Heart left ventricle (tissue), 16 donors: ENCODE measurements at regions of chr2 and their contacts with region 1.

Region 1: GRCh38 chr2:163471947-163472346 is 263.9 kb downstream of the FIGN start:
- DNase-seq: no peak
- ATAC-seq: peak; percentile 32 to 70 (median 52)
- H3K4me3 ChIP-seq: no peak overlapping the region
- H3K27ac ChIP-seq: no peak overlapping the region
- H3K4me1 ChIP-seq: peaks cover 0 to 19% (median 0%) of the 10 kb centered on the region in 12 donors
- H3K27me3 ChIP-seq: no peaks in the 10 kb centered on the region
- CTCF ChIP-seq: peak in 10 of 12 donors; percentile 17 to 56 (median 37)
- POLR2A ChIP-seq: no peak

Region 2: DNA sequence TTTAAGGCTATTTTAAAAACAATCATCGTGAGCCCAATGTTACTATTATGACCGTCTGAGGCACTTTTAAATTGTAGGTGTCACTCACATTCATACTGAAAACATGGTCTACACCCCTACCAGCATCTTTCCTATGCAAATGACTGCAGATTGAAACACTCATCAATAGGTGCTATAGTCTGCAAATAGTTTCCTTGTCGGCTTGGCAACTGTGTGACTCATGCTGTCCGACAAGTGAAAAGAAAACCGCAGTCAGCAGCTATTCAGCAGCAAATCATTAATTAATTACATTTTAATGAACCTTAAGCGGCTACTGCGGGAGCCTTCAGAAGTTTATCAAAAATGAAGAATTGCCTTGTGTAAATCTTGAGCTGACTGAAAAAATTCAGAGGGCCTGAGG is 129.4 kb after region 1 on chr2:
- intact Hi-C with region 1: loop called in 1 of 10 experiments (anchors 10 kb)
- DNase-seq: no peak
- ATAC-seq: no peak
- H3K4me3 ChIP-seq: no peak overlapping the region
- H3K27ac ChIP-seq: no peak overlapping the region
- H3K4me1 ChIP-seq: peaks cover 0 to 18% (median 4%) of the 10 kb centered on the region in 12 donors
- H3K27me3 ChIP-seq: no peaks in the 10 kb centered on the region
- CTCF ChIP-seq: no peak
- POLR2A ChIP-seq: no peak

Region 3: GRCh38 chr2:163641986-163642385 is 170.0 kb after region 1 on chr2:
- intact Hi-C with region 1: no loop called
- DNase-seq: no peak
- ATAC-seq: peak in 1 of 4 donors; percentile 38
- H3K4me3 ChIP-seq: no peak overlapping the region
- H3K27ac ChIP-seq: no peak overlapping the region
- H3K4me1 ChIP-seq: peaks cover 0 to 38% (median 6%) of the 10 kb centered on the region in 12 donors
- H3K27me3 ChIP-seq: no peaks in the 10 kb centered on the region
- CTCF ChIP-seq: no peak
- POLR2A ChIP-seq: no peak

Region 4: DNA sequence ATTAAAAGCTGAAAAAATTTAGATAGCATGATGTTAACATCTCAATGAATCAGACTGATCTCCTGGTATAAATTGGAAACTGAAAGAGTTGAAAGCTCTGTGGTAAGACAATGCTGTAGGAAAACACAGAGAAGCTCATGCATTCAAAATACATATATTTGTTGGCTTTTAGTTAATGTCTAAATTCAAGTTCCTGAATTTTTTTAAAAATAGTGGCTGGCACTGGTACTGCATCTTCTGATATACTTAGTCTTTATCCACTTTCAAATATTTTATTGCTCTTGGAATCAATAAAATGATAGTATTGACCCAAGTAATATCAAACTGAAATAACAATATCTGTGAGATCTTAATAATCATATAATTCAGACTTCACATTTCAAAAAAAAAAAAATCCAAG is 415.2 kb after region 1 on chr2:
- intact Hi-C with region 1: loop called in 1 of 10 experiments (anchors 10 kb)
- DNase-seq: no peak
- ATAC-seq: no peak
- H3K4me3 ChIP-seq: no peak overlapping the region
- H3K27ac ChIP-seq: no peak overlapping the region
- H3K4me1 ChIP-seq: no peaks in the 10 kb centered on the region
- H3K27me3 ChIP-seq: no peaks in the 10 kb centered on the region
- CTCF ChIP-seq: peak in 4 of 12 donors; percentile 10 to 63 (median 48)
- POLR2A ChIP-seq: no peak

Region 5: DNA sequence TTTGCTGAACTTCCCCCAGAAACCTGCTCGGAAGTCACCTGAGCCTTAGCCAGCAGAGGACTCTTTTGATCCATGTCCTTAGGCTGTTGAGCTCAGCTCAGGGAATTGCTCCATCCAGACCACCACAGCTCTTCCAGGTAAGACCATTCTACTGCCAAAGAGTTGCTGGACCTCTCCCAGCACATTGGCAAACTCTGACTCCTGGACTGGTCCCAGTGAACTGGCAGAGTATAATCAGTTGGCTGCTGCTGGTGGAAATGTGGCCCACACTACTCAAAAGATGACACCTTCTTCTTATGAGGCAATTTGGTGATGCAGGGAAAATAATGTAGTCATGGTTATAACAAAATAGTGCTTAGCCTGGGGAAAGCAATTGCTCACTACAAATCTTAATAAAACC is 572.7 kb after region 1 on chr2:
- intact Hi-C with region 1: loop called in 1 of 10 experiments (anchors 10 kb)
- DNase-seq: peak; percentile 33 to 82 (median 62)
- ATAC-seq: peak; percentile 92 to 98 (median 97)
- H3K4me3 ChIP-seq: no peak overlapping the region
- H3K27ac ChIP-seq: no peak overlapping the region
- H3K4me1 ChIP-seq: peaks cover 0 to 6% (median 0%) of the 10 kb centered on the region in 12 donors
- H3K27me3 ChIP-seq: no peaks in the 10 kb centered on the region
- CTCF ChIP-seq: no peak
- POLR2A ChIP-seq: no peak